Activated CD4-positive, alpha-beta memory T cell treated with anti-CD3 and anti-CD28 coated beads, Interleukin-2, amount 10 ng/mL, durations not matched to agents 7 days and 5 days (primary cell): ENCODE measurements at regions of chr1 and their contacts with region 1.

Region 1: GRCh38 chr1:179121159-179121938 is 39.5 kb downstream of the TOR3A start:
- DNase-seq: peak; percentile 44
- H3K4me3 Mint-ChIP-seq: no peak overlapping the region
- H3K27ac Mint-ChIP-seq: no peak overlapping the region
- H3K4me1 Mint-ChIP-seq: peaks cover 8% of the 10 kb centered on the region
- H3K27me3 Mint-ChIP-seq: no peaks in the 10 kb centered on the region

Region 2: GRCh38 chr1:179081687-179082332 is 39.5 kb before region 1 on chr1 and contains the start of gene TOR3A:
- CTCF ChIA-PET with region 1: interaction called, 12 read pairs
- POLR2A ChIA-PET with region 1: interaction called, 3 read pairs
- DNase-seq: peak; percentile 88
- H3K4me3 Mint-ChIP-seq: peak within 1 kb of the TSS; percentile 98
- H3K27ac Mint-ChIP-seq: peak within 1 kb of the TSS; percentile 94
- H3K4me1 Mint-ChIP-seq: peaks cover 35% of the 10 kb centered on the region
- H3K27me3 Mint-ChIP-seq: no peaks in the 10 kb centered on the region
- total RNA-seq, gene TOR3A: 47.1 to 51.5 TPM

Region 3: GRCh38 chr1:179105350-179105749 is 16.0 kb before region 1 on chr1:
- CTCF ChIA-PET with region 1: interaction called, 10 read pairs
- POLR2A ChIA-PET with region 1: no interaction called
- DNase-seq: no peak
- H3K4me3 Mint-ChIP-seq: no peak overlapping the region
- H3K27ac Mint-ChIP-seq: no peak overlapping the region
- H3K4me1 Mint-ChIP-seq: no peaks in the 10 kb centered on the region
- H3K27me3 Mint-ChIP-seq: no peaks in the 10 kb centered on the region

Region 4: GRCh38 chr1:179293340-179294327 is 172.3 kb after region 1 on chr1 and contains the start of gene SOAT1:
- CTCF ChIA-PET with region 1: interaction called, 18 read pairs
- POLR2A ChIA-PET with region 1: interaction called, 3 read pairs
- DNase-seq: peak; percentile 93
- H3K4me3 Mint-ChIP-seq: peak within 1 kb of the TSS; percentile 95
- H3K27ac Mint-ChIP-seq: peak within 1 kb of the TSS; percentile 89
- H3K4me1 Mint-ChIP-seq: peaks cover 41% of the 10 kb centered on the region
- H3K27me3 Mint-ChIP-seq: no peaks in the 10 kb centered on the region
- total RNA-seq, gene SOAT1: 55.7 to 58.3 TPM

Region 5: GRCh38 chr1:179794669-179795068 is 673.3 kb after region 1 on chr1:
- CTCF ChIA-PET with region 1: no interaction called
- POLR2A ChIA-PET with region 1: no interaction called
- DNase-seq: no peak
- H3K4me3 Mint-ChIP-seq: no peak overlapping the region
- H3K27ac Mint-ChIP-seq: no peak overlapping the region
- H3K4me1 Mint-ChIP-seq: no peaks in the 10 kb centered on the region
- H3K27me3 Mint-ChIP-seq: no peaks in the 10 kb centered on the region